CD4-positive, alpha-beta T cell (primary cell): ENCODE measurements at regions of chr10 and their contacts with region 1.

Region 1: GRCh38 chr10:43436400-43437140 is at the start of gene ZNF487:
- DNase-seq: peak; percentile 69 to 94 (median 85)
- ATAC-seq: peak; percentile 86
- H3K4me3 ChIP-seq: peak within 1 kb of the TSS; percentile 92
- H3K4me3 Mint-ChIP-seq: peak within 1 kb of the TSS; percentile 97
- H3K27ac ChIP-seq: peak within 1 kb of the TSS; percentile 95 to 96
- H3K27ac Mint-ChIP-seq: peak within 1 kb of the TSS; percentile 96
- H3K4me1 ChIP-seq: peaks cover 23% of the 10 kb centered on the region
- H3K4me1 Mint-ChIP-seq: peaks cover 27% of the 10 kb centered on the region
- H3K27me3 ChIP-seq: no peaks in the 10 kb centered on the region
- H3K27me3 Mint-ChIP-seq: no peaks in the 10 kb centered on the region
- CTCF ChIP-seq: no peak
- total RNA-seq, gene ZNF487: 7.5 to 8.5 TPM

Region 2: GRCh38 chr10:43396928-43397624 is 39.5 kb before region 1 on chr10:
- CTCF ChIA-PET with region 1: interaction called, 3 read pairs
- POLR2A ChIA-PET with region 1: interaction called, 10 read pairs
- intact Hi-C with region 1: loop called (anchors 2 to 5 kb)
- DNase-seq: peak; percentile 49 to 90 (median 64)
- ATAC-seq: peak; percentile 54
- H3K4me3 ChIP-seq: peak overlapping the region; percentile 67
- H3K4me3 Mint-ChIP-seq: peak overlapping the region; percentile 94
- H3K27ac ChIP-seq: peak overlapping the region; percentile 92 to 94
- H3K27ac Mint-ChIP-seq: peak overlapping the region; percentile 93
- H3K4me1 ChIP-seq: peaks cover 82% of the 10 kb centered on the region
- H3K4me1 Mint-ChIP-seq: peaks cover 86% of the 10 kb centered on the region
- H3K27me3 ChIP-seq: no peaks in the 10 kb centered on the region
- H3K27me3 Mint-ChIP-seq: no peaks in the 10 kb centered on the region
- CTCF ChIP-seq: no peak

Region 3: DNA sequence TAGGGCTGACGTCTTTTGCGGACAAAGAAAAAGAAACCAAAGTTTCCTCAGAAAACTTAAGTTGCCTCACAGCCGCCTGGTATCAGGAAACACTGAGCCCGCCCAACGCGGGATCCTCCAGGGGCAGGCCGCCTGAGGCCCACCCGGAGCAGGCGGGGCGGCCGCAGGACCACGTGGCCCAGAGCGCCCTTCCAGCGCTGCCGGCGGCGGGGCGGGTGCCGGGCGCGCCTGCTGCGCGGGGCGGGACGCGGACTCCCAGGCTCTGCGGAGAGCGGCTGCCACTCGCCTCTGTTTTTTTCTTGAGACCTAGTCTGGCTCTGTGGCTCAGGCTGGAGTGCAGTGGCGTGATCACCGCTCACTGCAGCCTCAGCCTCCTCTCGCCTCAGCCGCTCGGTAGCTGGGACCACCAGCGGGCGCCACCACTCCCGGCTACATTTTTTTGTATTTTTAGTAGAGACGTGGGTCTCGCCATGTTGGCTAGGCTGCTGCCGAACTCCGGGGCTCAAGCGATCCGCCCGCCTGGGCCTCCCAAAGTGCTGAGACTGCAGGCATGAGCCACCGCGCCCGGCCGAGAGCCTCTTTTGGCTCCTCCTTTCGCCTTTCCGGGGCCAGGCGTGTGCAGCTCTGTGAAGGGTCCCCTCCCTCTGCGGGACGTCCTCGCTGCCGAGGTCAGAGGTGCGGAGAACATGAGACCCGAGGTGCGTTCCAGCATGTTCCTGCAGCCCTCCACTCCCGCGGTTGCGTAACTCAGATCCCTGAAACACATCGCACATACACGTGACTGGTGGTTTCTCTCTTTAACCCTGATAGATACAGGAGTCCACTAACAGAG is 16.0 kb before region 1 on chr10:
- CTCF ChIA-PET with region 1: interaction called, 3 read pairs
- POLR2A ChIA-PET with region 1: interaction called, 20 read pairs
- intact Hi-C with region 1: loop called (anchors 1 to 2 kb)
- DNase-seq: peak; percentile 54 to 92 (median 72)
- ATAC-seq: peak; percentile 85
- H3K4me3 ChIP-seq: peak overlapping the region; percentile 84
- H3K4me3 Mint-ChIP-seq: peak overlapping the region; percentile 91
- H3K27ac ChIP-seq: peak overlapping the region; percentile 85 to 92
- H3K27ac Mint-ChIP-seq: peak overlapping the region; percentile 92
- H3K4me1 ChIP-seq: peaks cover 42% of the 10 kb centered on the region
- H3K4me1 Mint-ChIP-seq: peaks cover 39% of the 10 kb centered on the region
- H3K27me3 ChIP-seq: no peaks in the 10 kb centered on the region
- H3K27me3 Mint-ChIP-seq: no peaks in the 10 kb centered on the region
- CTCF ChIP-seq: peak; percentile 30

Region 4: GRCh38 chr10:43453266-43453831 is 16.8 kb after region 1 on chr10:
- CTCF ChIA-PET with region 1: interaction called, 3 read pairs
- POLR2A ChIA-PET with region 1: interaction called, 23 read pairs
- intact Hi-C with region 1: loop called (anchors 1 kb)
- DNase-seq: peak in 1 of 14 experiments; percentile 12
- ATAC-seq: no peak
- H3K4me3 ChIP-seq: no peak overlapping the region
- H3K4me3 Mint-ChIP-seq: peak overlapping the region; percentile 88
- H3K27ac ChIP-seq: peak overlapping the region; percentile 64 to 75
- H3K27ac Mint-ChIP-seq: peak overlapping the region; percentile 97
- H3K4me1 ChIP-seq: peaks cover 61% of the 10 kb centered on the region
- H3K4me1 Mint-ChIP-seq: peaks cover 59% of the 10 kb centered on the region
- H3K27me3 ChIP-seq: no peaks in the 10 kb centered on the region
- H3K27me3 Mint-ChIP-seq: no peaks in the 10 kb centered on the region
- CTCF ChIP-seq: no peak